ENCODE measurements at regions of chr6 and their contacts with region 1.

Region 1: DNA sequence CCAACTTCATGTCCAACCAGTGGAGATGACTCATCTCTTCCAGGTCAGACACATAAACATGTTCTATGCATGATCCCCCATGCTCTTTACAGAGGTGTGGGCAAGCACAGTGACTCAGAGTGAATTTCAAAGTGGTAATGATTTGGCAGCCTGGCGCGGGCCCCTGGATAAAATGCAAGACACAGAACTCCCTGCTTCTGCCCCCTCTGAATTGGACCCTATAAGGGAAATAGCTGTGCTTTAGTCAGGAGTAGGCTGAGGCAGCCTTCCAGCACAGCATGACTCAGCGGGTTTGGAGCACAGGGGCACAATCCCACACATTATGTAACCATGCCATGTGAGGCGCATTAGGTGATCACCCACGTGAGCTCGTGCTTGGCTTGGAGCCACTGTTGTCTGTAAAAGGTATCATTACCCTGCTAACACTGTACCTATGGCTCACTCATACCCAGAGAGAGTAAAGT is 127.4 kb downstream of the C6orf118 start:
- DNase-seq: peak; percentile 21
- H3K4me3 ChIP-seq: no peak overlapping the region
- H3K27ac ChIP-seq: peak overlapping the region; percentile 23
- H3K4me1 ChIP-seq: peaks cover 26% of the 10 kb centered on the region
- H3K27me3 ChIP-seq: no peaks in the 10 kb centered on the region
- CTCF ChIP-seq: no peak

Region 2: GRCh38 chr6:165106261-165106660 is 75.7 kb before region 1 on chr6:
- CTCF ChIA-PET with region 1: no interaction called
- dilution Hi-C with region 1: no loop called
- in situ Hi-C with region 1: no loop called
- intact Hi-C with region 1: loop called (anchors 1 kb)
- DNase-seq: peak; percentile 21
- H3K4me3 ChIP-seq: no peak overlapping the region
- H3K27ac ChIP-seq: peak overlapping the region; percentile 51
- H3K4me1 ChIP-seq: no peaks in the 10 kb centered on the region
- H3K27me3 ChIP-seq: no peaks in the 10 kb centered on the region
- CTCF ChIP-seq: no peak

Region 3: DNA sequence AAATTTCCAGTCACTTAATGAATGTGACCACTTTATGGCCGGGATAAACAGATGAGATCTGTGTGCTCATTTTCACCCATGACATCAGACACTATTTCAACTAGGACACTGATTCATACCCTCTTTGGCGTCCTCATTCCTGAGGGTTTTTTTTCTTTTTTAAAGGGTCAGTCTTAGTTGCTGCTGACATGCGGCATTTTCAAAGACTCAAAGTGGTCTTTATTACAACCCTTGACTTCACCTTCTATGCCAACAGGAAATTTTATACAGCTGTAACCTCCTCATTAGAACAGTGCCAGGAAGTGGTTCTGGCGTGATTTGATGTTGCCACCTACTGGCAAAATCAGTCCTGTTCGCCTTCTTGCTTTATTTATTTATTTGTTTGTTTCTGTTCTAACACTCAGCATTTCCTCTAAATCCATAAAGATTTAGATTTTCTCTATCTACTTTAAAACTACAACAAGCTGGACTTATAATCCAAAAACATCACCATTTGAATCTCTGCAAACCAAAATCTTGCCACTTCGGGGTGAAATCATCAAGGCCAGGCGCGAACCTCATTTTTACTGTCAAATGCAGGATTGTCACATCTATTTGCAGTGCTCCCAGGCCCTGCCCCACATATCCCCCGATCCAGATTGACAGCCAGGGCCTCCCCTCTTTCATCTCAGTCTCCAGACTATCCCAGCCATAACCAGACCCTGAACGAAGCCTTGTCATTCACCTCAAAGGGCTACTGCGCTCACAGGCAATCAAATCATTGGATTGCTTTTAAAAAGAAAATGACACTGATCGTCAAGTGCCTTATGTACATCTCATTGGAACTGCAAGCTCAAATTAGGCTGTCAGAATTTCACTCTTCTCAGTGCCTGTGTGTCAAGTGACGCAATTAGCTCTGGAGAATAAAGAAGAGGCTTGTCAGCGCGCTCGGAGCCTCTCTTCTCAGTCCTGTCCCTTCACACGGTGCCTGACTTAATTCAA is 49.9 kb after region 1 on chr6:
- CTCF ChIA-PET with region 1: no interaction called
- dilution Hi-C with region 1: no loop called
- in situ Hi-C with region 1: no loop called
- intact Hi-C with region 1: loop called (anchors 2 kb)
- DNase-seq: peak; percentile 0
- H3K4me3 ChIP-seq: no peak overlapping the region
- H3K27ac ChIP-seq: no peak overlapping the region
- H3K4me1 ChIP-seq: no peaks in the 10 kb centered on the region
- H3K27me3 ChIP-seq: no peaks in the 10 kb centered on the region
- CTCF ChIP-seq: peak; percentile 45 to 58

Measured in mammary epithelial cell (primary cell).